Activated T-helper 1 cell treated with anti-CD3 and anti-CD28 coated beads, Interleukin-12 subunit alpha, Interleukin-12 subunit beta, Interleukin-2, Interleukin-4 antibody, amounts not matched to agents 30 ng/mL and 10 ng/mL and 1 ng/mL, durations not matched to agents 14 hours and 24 hours and 36 hours (primary cell): ENCODE measurements at regions of chr10 and their contacts with region 1.

Region 1: DNA sequence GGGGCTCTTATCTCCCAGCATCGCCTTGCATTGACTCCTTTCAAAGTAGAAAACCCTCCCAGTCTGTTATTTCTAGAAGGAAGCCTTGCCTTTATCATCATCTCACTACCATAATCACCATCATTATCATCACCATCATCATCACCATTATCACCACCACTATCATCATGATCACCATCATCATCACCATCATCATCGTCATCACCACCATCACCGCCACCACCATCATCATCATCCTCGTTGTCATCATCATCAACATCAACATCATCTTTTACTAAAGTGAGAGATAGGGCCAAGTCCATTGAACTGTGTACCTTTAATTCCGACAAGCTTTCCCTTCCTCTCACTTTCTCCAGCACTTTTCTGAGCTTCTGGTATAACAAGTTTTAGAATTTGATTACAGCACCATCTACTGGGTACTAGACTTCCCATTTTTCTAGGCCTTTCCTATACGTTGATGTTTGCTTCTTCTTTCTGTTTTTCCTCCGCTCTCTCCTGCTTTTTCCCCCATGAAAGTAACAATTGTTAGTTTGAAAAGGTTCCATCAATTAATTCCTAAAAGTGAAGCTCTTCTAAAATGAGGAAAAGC is 226.4 kb downstream of the BUB3 start:
- DNase-seq: no peak
- H3K4me3 Mint-ChIP-seq: no peak overlapping the region
- H3K27ac Mint-ChIP-seq: no peak overlapping the region
- H3K4me1 Mint-ChIP-seq: no peaks in the 10 kb centered on the region
- H3K27me3 Mint-ChIP-seq: no peaks in the 10 kb centered on the region

Region 2: GRCh38 chr10:123043409-123043925 is 337.1 kb before region 1 on chr10:
- intact Hi-C with region 1: loop called (anchors 2 kb)
- DNase-seq: peak; percentile 12
- H3K4me3 Mint-ChIP-seq: no peak overlapping the region
- H3K27ac Mint-ChIP-seq: no peak overlapping the region
- H3K4me1 Mint-ChIP-seq: peaks cover 18% of the 10 kb centered on the region
- H3K27me3 Mint-ChIP-seq: no peaks in the 10 kb centered on the region

Region 3: DNA sequence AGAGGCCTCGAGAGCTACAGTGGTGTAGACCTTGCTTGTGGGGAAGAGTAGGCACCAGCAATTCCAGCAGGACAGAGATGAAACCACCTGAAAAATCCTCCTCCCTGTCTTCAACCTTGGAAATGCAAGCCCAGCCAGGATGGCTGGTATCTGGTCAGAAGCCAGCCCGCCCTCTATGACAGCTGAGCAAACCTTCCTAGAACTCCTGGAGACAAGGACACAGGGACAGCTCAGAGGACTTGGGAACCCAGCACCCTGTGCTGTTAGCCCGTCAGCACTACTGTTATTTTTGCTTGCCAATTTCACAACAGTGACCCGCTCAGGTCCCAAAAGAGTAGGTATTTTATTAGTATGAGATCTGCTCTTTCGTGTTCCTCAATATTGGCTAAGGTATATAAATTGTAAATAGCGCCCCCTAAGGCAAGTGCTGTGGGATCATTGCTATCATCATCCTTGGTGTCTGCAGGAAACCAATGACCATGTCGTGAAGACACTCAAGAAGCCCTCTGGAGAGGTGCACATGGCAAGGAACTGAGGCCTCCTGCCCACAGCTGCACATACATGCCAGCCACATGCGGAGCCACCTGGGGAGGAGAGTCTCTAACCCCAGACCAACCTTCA is 869.3 kb after region 1 on chr10:
- intact Hi-C with region 1: no loop called
- DNase-seq: no peak
- H3K4me3 Mint-ChIP-seq: no peak overlapping the region
- H3K27ac Mint-ChIP-seq: no peak overlapping the region
- H3K4me1 Mint-ChIP-seq: no peaks in the 10 kb centered on the region
- H3K27me3 Mint-ChIP-seq: peaks cover 2% of the 10 kb centered on the region